ENCODE measurements at regions of chr7 and their contacts with region 1.

Region 1: GRCh38 chr7:35801392-35802101 is 690 bp downstream of the SEPTIN7 start:
- DNase-seq: peak; percentile 17
- ATAC-seq: peak; percentile 65
- H3K4me3 ChIP-seq: peak overlapping the region; percentile 79 to 94
- H3K27ac ChIP-seq: peak overlapping the region; percentile 99
- H3K4me1 ChIP-seq: peaks cover 44% of the 10 kb centered on the region
- H3K27me3 ChIP-seq: no peaks in the 10 kb centered on the region
- CTCF ChIP-seq: peak; percentile 95

Region 2: GRCh38 chr7:35313575-35313974 is 488.0 kb before region 1 on chr7:
- CTCF ChIA-PET with region 1: no interaction called
- POLR2A ChIA-PET with region 1: no interaction called
- in situ Hi-C with region 1: no loop called
- intact Hi-C with region 1: no loop called
- DNase-seq: no peak
- ATAC-seq: no peak
- H3K4me3 ChIP-seq: no peak overlapping the region
- H3K27ac ChIP-seq: no peak overlapping the region
- H3K4me1 ChIP-seq: no peaks in the 10 kb centered on the region
- H3K27me3 ChIP-seq: no peaks in the 10 kb centered on the region; the same call in 1 of the 2 replicates
- CTCF ChIP-seq: no peak

Region 3: DNA sequence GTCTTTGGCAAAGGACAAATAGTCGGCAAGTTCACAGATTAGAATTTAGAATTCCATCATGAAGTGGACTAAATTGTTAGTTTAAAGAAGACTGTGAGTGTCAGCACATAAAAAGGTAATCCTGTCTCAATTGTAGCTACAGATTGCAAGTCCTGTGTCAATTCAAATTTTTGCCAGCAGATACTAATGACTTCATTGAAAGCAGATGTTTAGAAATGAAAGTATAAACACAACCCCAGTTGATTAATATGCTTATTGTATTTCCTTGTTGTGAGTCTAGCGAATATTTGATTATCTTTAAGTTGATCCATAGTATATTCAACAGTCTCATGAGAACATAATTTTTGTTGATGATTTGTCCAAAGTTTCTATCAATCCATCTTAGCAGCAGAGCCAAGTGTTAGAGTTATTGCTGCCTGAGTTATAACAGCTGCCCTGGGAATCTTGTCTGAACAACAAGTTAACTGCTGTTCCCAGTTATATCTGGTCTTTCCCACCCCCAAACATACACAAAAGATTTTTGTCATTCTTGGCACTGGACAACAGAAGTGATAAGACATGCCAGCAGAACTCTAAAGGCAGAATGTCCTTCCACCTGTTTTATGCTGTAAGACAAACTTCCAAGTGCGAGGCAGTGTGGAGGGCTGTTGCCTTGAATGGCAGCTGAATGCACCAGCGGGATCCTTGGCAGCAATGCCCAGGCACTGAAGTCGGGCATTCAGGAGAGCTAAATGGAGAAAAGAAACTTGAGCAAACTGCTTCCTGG is 85.3 kb before region 1 on chr7:
- CTCF ChIA-PET with region 1: no interaction called
- POLR2A ChIA-PET with region 1: interaction called, 8 read pairs
- in situ Hi-C with region 1: no loop called
- intact Hi-C with region 1: loop called (anchors 10 kb)
- DNase-seq: no peak
- ATAC-seq: peak; percentile 58; the same call in 1 of the 2 replicates
- H3K4me3 ChIP-seq: peak overlapping the region in 1 of 2 experiments; percentile 1; a peak in 1 of 4 replicates
- H3K27ac ChIP-seq: no peak overlapping the region
- H3K4me1 ChIP-seq: 0 out of 2 replicates have a peak, but pooled peaks cover 2% of the 10 kb centered on the region
- H3K27me3 ChIP-seq: peaks cover 12% of the 10 kb centered on the region; the same call in 1 of the 2 replicates
- CTCF ChIP-seq: no peak

Region 4: DNA sequence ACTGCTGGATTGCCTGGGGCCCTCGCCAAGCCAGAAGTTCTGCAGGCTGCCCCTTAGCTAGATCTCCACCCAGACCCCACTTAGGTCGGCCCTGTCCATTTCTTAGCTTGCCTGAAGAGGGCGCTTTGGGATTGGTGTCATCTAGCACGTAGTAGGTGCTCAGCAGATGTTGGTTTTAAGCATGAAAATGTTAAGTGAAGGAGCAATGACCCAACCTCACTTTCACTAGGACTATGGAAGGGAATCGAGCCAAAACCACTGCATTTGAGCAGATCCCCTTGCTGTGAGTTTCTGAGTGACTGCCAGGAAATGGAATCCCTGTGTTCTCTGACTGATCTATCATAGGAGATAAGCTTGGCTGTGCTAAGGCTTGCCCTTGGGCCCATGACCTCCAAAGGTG is 219.8 kb after region 1 on chr7:
- CTCF ChIA-PET with region 1: no interaction called
- POLR2A ChIA-PET with region 1: no interaction called
- in situ Hi-C with region 1: no loop called
- intact Hi-C with region 1: no loop called
- DNase-seq: no peak
- ATAC-seq: peak; percentile 56; the same call in 1 of the 2 replicates
- H3K4me3 ChIP-seq: no peak overlapping the region
- H3K27ac ChIP-seq: no peak overlapping the region
- H3K4me1 ChIP-seq: no peaks in the 10 kb centered on the region
- H3K27me3 ChIP-seq: no peaks in the 10 kb centered on the region
- CTCF ChIP-seq: peak; percentile 84